Sigmoid colon (tissue), 7 donors: ENCODE measurements at regions of chr17 and their contacts with region 1.

Region 1: GRCh38 chr17:846901-847843 is 65.0 kb downstream of the MRM3 start:
- DNase-seq: no peak
- H3K4me3 ChIP-seq: peak overlapping the region; percentile 7 to 46 (median 38)
- H3K27ac ChIP-seq: peak overlapping the region; percentile 77 to 89 (median 84)
- H3K4me1 ChIP-seq: peaks cover 0 to 77% (median 64%) of the 10 kb centered on the region in 4 donors
- H3K27me3 ChIP-seq: no peaks in the 10 kb centered on the region
- CTCF ChIP-seq: no peak
- EP300 ChIP-seq: no peak
- POLR2A ChIP-seq: no peak

Region 2: GRCh38 chr17:927611-928461 is 80.7 kb after region 1 on chr17:
- intact Hi-C with region 1: no loop called
- DNase-seq: peak; percentile 82
- H3K4me3 ChIP-seq: peak overlapping the region in 1 of 4 donors; percentile 4
- H3K27ac ChIP-seq: peak overlapping the region; percentile 55 to 88 (median 76)
- H3K4me1 ChIP-seq: peaks cover 0 to 53% (median 41%) of the 10 kb centered on the region in 4 donors
- H3K27me3 ChIP-seq: no peaks in the 10 kb centered on the region
- CTCF ChIP-seq: no peak
- EP300 ChIP-seq: no peak
- POLR2A ChIP-seq: peak in 1 of 2 donors; percentile 11

Region 3: DNA sequence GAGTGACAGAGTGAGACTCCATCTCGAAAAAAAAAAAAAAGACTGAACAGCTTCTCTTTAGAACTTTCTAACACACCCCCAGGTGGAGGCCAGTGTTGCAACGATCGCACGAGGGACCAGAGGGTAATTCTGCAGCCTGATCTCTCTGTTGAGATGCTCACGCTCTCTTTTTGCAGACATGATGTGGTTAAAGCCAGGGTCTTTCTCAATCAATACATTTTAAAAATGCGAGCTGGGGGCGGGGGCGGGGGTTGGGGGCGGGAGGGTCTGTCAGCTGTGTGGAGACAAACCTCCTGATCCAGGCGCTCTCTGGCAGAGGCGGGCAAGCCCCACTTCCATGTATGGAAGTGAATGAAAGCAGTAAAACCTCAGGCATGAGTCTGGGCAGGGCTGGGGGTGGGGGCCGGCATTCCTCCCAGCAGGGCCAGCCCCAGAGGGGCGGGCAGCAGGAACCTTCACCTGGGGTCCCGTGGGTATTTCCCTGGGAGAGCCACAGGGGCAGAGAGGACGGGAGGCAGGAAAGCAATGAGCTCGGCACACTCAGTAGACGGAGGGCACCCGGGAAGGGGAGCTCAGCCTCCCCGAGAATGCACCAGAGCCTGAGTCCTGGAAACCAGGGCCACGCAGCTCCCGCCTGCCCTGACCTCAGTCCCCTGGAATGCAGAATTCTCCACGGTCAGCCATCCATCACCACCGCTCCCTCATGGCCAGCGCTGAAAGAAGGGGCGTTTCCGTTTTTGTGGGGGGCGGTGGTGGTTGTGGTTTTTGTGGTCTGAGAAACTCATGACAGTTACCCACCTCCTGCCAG is 104.4 kb after region 1 on chr17:
- intact Hi-C with region 1: loop called (anchors 5 kb)
- DNase-seq: peak; percentile 85
- H3K4me3 ChIP-seq: peak overlapping the region in 3 of 4 donors; percentile 2 to 21 (median 20)
- H3K27ac ChIP-seq: peak overlapping the region; percentile 84 to 93 (median 88)
- H3K4me1 ChIP-seq: peaks cover 0 to 58% (median 42%) of the 10 kb centered on the region in 4 donors
- H3K27me3 ChIP-seq: no peaks in the 10 kb centered on the region
- CTCF ChIP-seq: no peak
- EP300 ChIP-seq: peak in 1 of 4 donors; percentile 28
- POLR2A ChIP-seq: no peak